ENCODE measurements at regions of chr10 and their contacts with region 1.

Region 1: GRCh38 chr10:88800152-88801125 is 2.1 kb upstream of the LIPM start:
- DNase-seq: no peak
- H3K4me3 Mint-ChIP-seq: no peak overlapping the region
- H3K27ac Mint-ChIP-seq: peak overlapping the region; percentile 33
- H3K4me1 Mint-ChIP-seq: peaks cover 28% of the 10 kb centered on the region
- H3K27me3 Mint-ChIP-seq: peaks cover 40% of the 10 kb centered on the region

Region 2: GRCh38 chr10:88565072-88565471 is 235.4 kb before region 1 on chr10:
- intact Hi-C with region 1: loop called (anchors 10 kb)
- DNase-seq: no peak
- H3K4me3 Mint-ChIP-seq: no peak overlapping the region
- H3K27ac Mint-ChIP-seq: no peak overlapping the region
- H3K4me1 Mint-ChIP-seq: peaks cover 2% of the 10 kb centered on the region
- H3K27me3 Mint-ChIP-seq: peaks cover 30% of the 10 kb centered on the region

Region 3: DNA sequence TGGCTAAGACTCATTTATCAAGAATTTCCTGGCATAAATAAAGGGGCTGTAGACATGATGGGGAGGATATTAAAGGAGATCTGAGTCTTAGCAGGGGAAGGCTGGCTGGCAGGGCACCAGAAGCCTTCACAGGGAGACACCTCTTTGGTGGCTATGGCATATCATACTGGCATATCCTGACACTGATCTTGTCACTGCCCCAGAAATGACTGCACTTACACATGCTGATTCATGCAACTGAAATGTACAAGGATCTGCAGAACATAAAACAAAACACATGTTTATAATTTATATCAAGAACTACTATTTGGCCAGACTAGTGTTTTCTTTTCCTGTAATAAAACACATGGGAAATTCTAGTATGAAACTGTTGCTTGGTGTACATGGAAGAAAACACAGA is 46.2 kb before region 1 on chr10:
- intact Hi-C with region 1: loop called (anchors 2 kb)
- DNase-seq: no peak
- H3K4me3 Mint-ChIP-seq: no peak overlapping the region
- H3K27ac Mint-ChIP-seq: no peak overlapping the region
- H3K4me1 Mint-ChIP-seq: peaks cover 6% of the 10 kb centered on the region
- H3K27me3 Mint-ChIP-seq: peaks cover 43% of the 10 kb centered on the region

Region 4: GRCh38 chr10:88820748-88821389 is 20.4 kb after region 1 on chr10:
- intact Hi-C with region 1: loop called (anchors 1 kb)
- DNase-seq: no peak
- H3K4me3 Mint-ChIP-seq: no peak overlapping the region
- H3K27ac Mint-ChIP-seq: no peak overlapping the region
- H3K4me1 Mint-ChIP-seq: peaks cover 23% of the 10 kb centered on the region
- H3K27me3 Mint-ChIP-seq: no peaks in the 10 kb centered on the region